CD8-positive, alpha-beta T cell (primary cell): ENCODE measurements at regions of chr7 and their contacts with region 1.

Region 1: DNA sequence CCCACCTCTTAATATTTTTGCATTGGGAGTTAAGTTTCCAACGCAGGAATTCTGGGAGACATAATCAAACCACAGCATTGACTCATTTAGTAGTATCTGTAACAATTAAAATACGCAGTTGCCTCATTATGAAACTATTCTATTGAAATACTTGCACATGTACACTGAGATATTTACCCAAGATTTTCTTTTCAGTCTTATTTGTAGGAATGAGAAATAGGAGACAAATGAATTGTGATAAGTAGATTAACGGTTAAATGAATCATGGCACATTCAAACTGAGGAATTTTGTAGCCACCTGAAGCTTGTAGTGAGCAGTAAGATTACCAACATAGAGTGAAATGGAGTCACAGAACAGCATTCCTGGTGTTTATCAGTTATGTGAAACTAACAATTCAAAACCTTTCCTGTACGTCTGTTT is 18.1 kb downstream of the RP9 start:
- DNase-seq: no peak
- ATAC-seq: no peak
- H3K4me3 ChIP-seq: no peak overlapping the region
- H3K4me3 Mint-ChIP-seq: no peak overlapping the region
- H3K27ac ChIP-seq: no peak overlapping the region
- H3K27ac Mint-ChIP-seq: no peak overlapping the region
- H3K4me1 ChIP-seq: no peaks in the 10 kb centered on the region
- H3K4me1 Mint-ChIP-seq: no peaks in the 10 kb centered on the region
- H3K27me3 ChIP-seq: no peaks in the 10 kb centered on the region
- H3K27me3 Mint-ChIP-seq: no peaks in the 10 kb centered on the region
- CTCF ChIP-seq: no peak

Region 2: DNA sequence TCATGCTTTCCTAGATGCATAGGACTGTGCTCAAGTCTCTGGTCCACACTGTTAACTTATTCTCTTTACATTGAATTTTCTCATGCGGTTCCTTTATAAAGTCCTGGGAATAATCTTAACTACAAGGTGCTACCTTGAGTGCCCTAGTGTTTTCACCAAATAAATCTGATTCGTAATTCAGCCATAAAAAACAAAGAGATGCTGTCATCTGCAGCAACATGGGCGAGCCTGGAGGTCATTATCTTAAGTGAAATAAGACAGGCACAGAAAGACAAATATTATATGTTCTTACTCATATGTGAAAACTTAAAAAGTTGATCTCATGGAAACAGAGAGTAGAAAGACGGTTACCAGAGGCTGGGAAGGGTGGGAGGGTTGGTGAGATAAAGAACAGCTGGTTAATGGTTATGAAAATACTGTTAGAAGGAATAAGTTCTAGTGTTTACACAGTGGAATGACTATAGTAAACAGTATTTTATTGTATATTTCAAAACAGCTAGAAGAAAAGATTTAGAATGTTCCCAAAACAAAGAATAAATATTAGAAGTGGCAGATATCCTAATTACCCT is 66.8 kb before region 1 on chr7:
- CTCF ChIA-PET with region 1: no interaction called
- POLR2A ChIA-PET with region 1: no interaction called
- intact Hi-C with region 1: loop called in 1 of 2 experiments (anchors 5 kb)
- DNase-seq: no peak
- ATAC-seq: no peak
- H3K4me3 ChIP-seq: no peak overlapping the region
- H3K4me3 Mint-ChIP-seq: no peak overlapping the region
- H3K27ac ChIP-seq: no peak overlapping the region
- H3K27ac Mint-ChIP-seq: no peak overlapping the region
- H3K4me1 ChIP-seq: no peaks in the 10 kb centered on the region
- H3K4me1 Mint-ChIP-seq: no peaks in the 10 kb centered on the region
- H3K27me3 ChIP-seq: no peaks in the 10 kb centered on the region
- H3K27me3 Mint-ChIP-seq: no peaks in the 10 kb centered on the region
- CTCF ChIP-seq: no peak